ENCODE measurements at regions of chr1 and their contacts with region 1.

Region 1: GRCh38 chr1:146007506-146008133 is 11.2 kb upstream of the TXNIP start:
- DNase-seq: no peak
- ATAC-seq: no peak
- H3K4me3 Mint-ChIP-seq: no peak overlapping the region
- H3K27ac Mint-ChIP-seq: peak overlapping the region; percentile 92
- H3K4me1 Mint-ChIP-seq: peaks cover 28% of the 10 kb centered on the region
- H3K27me3 Mint-ChIP-seq: no peaks in the 10 kb centered on the region

Region 2: GRCh38 chr1:145988768-145989167 is 18.9 kb before region 1 on chr1:
- CTCF ChIA-PET with region 1: interaction called, 14 read pairs
- DNase-seq: no peak
- ATAC-seq: no peak
- H3K4me3 Mint-ChIP-seq: no peak overlapping the region
- H3K27ac Mint-ChIP-seq: peak overlapping the region; percentile 37
- H3K4me1 Mint-ChIP-seq: peaks cover 49% of the 10 kb centered on the region
- H3K27me3 Mint-ChIP-seq: no peaks in the 10 kb centered on the region

Region 3: GRCh38 chr1:145996433-145997015 is 11.1 kb before region 1 on chr1 and contains the start of gene TXNIP:
- CTCF ChIA-PET with region 1: interaction called, 14 read pairs
- DNase-seq: peak; percentile 98
- ATAC-seq: peak; percentile 95
- H3K4me3 Mint-ChIP-seq: peak within 1 kb of the TSS; percentile 99
- H3K27ac Mint-ChIP-seq: peak within 1 kb of the TSS; percentile 94
- H3K4me1 Mint-ChIP-seq: peaks cover 62% of the 10 kb centered on the region
- H3K27me3 Mint-ChIP-seq: no peaks in the 10 kb centered on the region
- total RNA-seq, gene TXNIP: 127 to 207 TPM

Measured in activated CD8-positive, alpha-beta memory T cell treated with anti-CD3 and anti-CD28 coated beads, Interleukin-2, amount 10 ng/mL, durations not matched to agents 7 days and 5 days (primary cell).